ENCODE measurements at regions of chr14 and their contacts with region 1.

Region 1: DNA sequence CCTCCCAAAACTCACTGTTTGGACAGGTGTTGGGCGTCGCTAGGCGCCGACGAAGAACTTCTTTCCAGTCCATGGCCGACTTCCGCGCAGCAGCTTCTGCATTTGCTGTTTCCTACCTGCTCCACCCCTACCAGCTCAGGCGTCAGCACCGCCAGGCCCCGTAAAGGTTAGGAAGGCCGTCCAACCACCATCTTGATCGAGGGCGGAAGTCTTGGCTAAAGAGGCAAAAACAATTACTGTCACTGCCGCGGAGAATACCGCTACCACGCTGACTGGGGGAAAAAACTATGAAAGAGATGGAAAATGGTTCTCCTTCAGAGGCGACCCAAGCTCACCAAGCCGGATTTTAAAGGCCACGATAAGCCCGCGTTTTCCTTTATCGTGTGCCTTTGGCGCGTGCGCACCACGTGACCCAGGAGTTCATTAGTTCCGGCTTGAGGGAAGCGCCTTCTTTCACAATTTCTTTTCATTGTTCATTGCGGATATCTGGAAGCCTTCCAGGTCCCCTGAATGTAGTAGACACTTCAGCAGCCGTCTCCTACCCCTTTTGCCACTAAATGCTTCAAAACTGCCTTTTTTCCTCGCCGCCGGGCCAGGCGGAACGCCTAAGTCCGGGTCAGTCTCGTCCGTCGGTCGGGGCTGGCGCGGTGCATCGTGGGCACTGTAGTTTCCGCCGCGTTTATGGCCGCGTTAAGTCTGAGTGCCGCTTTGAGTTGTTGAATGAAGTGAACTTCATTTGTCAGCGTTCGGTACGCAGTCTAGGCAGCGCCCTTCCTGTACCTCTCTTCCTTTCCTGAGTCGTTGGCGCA is at the starts of genes PPP2R3C and PRORP:
- DNase-seq: peak; percentile 96
- total RNA-seq, gene PPP2R3C: 26.1 TPM
- total RNA-seq, gene PRORP: 19.6 TPM

Region 2: GRCh38 chr14:34982417-34983147 is 139.5 kb before region 1 on chr14 and contains the start of gene SRP54:
- intact Hi-C with region 1: loop called (anchors 2 kb)
- DNase-seq: peak; percentile 99
- total RNA-seq, gene SRP54: 33.9 TPM

Region 3: DNA sequence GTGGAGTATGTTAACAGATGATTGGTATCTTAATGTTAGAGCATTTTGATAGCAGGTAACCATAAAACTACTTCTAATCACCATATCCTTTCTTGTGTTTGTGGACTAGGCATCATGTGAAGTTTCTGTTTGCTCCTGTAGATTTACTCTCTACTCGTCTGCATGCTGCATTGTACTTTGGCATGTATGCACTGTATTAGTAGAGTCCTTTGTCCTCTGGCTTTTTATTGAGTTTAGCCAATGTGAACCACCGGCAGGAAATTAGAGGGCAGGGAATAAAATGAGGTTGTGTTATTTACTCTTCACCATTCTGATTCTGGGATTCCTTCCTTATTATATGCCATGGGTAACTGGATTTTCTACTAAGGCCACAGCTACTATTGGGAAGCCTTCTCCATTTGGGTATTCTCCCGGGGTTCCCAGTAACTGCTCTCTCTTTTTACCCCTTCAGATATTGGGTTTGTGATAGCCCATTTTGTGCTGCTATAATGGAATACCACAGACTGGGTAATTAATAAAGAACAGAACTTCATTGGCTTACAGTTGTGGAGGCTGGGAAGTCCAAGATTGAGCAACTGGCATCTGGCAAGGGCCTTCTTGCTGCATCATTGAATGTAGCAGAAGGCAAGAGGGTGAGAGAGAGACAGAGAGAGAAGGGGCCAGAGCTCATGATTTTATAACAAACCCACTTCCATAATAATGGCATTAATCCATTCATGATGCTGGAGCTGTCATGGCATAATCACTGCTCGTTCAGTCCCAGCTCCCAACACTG is 53.7 kb before region 1 on chr14:
- intact Hi-C with region 1: loop called (anchors 5 kb)
- DNase-seq: no peak

Region 4: GRCh38 chr14:35088514-35088913 is 33.6 kb before region 1 on chr14:
- intact Hi-C with region 1: no loop called
- DNase-seq: no peak